CD4-positive, alpha-beta T cell (primary cell): ENCODE measurements at regions of chr1 and their contacts with region 1.

Region 1: GRCh38 chr1:24415334-24415909 is at the start of gene NIPAL3:
- DNase-seq: peak; percentile 92 to 99 (median 96)
- ATAC-seq: peak; percentile 94
- H3K4me3 ChIP-seq: peak within 1 kb of the TSS; percentile 82
- H3K4me3 Mint-ChIP-seq: peak within 1 kb of the TSS; percentile 97
- H3K27ac ChIP-seq: peak within 1 kb of the TSS; percentile 44 to 50
- H3K27ac Mint-ChIP-seq: peak within 1 kb of the TSS; percentile 91
- H3K4me1 ChIP-seq: peaks cover 61% of the 10 kb centered on the region
- H3K4me1 Mint-ChIP-seq: peaks cover 79% of the 10 kb centered on the region
- H3K27me3 ChIP-seq: no peaks in the 10 kb centered on the region
- H3K27me3 Mint-ChIP-seq: no peaks in the 10 kb centered on the region
- CTCF ChIP-seq: peak; percentile 87
- total RNA-seq, gene NIPAL3: 26.3 to 29.8 TPM

Region 2: DNA sequence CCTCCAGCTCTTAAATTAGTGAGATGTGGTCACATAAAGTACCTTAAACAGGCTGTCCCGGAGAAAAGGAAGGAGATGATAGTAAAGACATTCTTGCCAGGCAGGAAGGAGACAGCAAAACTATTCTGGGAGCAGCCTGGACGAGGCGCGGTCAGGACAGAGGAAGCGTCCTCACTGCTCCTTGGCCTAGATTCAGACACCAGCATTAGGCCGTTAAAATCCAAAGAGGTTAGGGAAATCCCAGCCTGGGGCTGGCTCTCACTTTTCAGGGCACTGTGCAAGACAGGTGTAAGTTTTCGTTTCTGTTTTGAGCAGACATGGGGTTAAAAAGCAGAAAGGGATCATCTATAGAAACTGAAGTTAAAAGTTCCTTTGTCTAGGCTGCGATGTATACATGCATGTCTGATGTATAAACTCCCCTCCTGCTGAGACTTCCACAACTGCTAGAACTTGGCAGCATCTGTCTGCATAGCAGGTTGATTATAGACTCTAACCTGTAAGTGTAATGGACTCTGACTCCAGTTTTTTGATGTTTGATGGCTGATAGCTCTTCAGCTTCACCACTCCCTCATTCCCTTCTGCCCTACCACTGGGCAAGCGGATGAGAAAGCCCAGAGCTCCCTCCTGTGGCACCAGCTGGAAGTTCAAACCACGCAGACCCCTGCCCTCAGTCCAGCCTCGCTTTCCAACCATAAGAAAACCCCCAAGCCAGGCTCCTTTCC is 23.4 kb before region 1 on chr1:
- CTCF ChIA-PET with region 1: interaction called, 40 read pairs
- POLR2A ChIA-PET with region 1: interaction called, 19 read pairs
- intact Hi-C with region 1: no loop called
- DNase-seq: peak; percentile 44 to 84 (median 55)
- ATAC-seq: peak; percentile 79
- H3K4me3 ChIP-seq: peak overlapping the region; percentile 32
- H3K4me3 Mint-ChIP-seq: peak overlapping the region; percentile 52
- H3K27ac ChIP-seq: peak overlapping the region; percentile 63 to 78
- H3K27ac Mint-ChIP-seq: peak overlapping the region; percentile 85
- H3K4me1 ChIP-seq: peaks cover 29% of the 10 kb centered on the region
- H3K4me1 Mint-ChIP-seq: peaks cover 42% of the 10 kb centered on the region
- H3K27me3 ChIP-seq: no peaks in the 10 kb centered on the region
- H3K27me3 Mint-ChIP-seq: no peaks in the 10 kb centered on the region
- CTCF ChIP-seq: peak; percentile 75

Region 3: GRCh38 chr1:24426744-24427544 is 11.5 kb after region 1 on chr1:
- CTCF ChIA-PET with region 1: interaction called, 18 read pairs
- POLR2A ChIA-PET with region 1: interaction called, 21 read pairs
- intact Hi-C with region 1: no loop called
- DNase-seq: no peak
- ATAC-seq: no peak
- H3K4me3 ChIP-seq: no peak overlapping the region
- H3K4me3 Mint-ChIP-seq: no peak overlapping the region
- H3K27ac ChIP-seq: no peak overlapping the region
- H3K27ac Mint-ChIP-seq: no peak overlapping the region
- H3K4me1 ChIP-seq: peaks cover 23% of the 10 kb centered on the region
- H3K4me1 Mint-ChIP-seq: peaks cover 77% of the 10 kb centered on the region
- H3K27me3 ChIP-seq: no peaks in the 10 kb centered on the region
- H3K27me3 Mint-ChIP-seq: no peaks in the 10 kb centered on the region
- CTCF ChIP-seq: no peak

Region 4: GRCh38 chr1:24486331-24487065 is 71.1 kb after region 1 on chr1:
- CTCF ChIA-PET with region 1: interaction called, 16 read pairs
- POLR2A ChIA-PET with region 1: interaction called, 40 read pairs
- intact Hi-C with region 1: loop called (anchors 2 to 5 kb)
- DNase-seq: peak in 12 of 14 experiments; percentile 24 to 84 (median 38)
- ATAC-seq: peak; percentile 46
- H3K4me3 ChIP-seq: peak overlapping the region; percentile 12
- H3K4me3 Mint-ChIP-seq: peak overlapping the region; percentile 77
- H3K27ac ChIP-seq: peak overlapping the region; percentile 43 to 68
- H3K27ac Mint-ChIP-seq: peak overlapping the region; percentile 98
- H3K4me1 ChIP-seq: peaks cover 78% of the 10 kb centered on the region
- H3K4me1 Mint-ChIP-seq: peaks cover 77% of the 10 kb centered on the region
- H3K27me3 ChIP-seq: no peaks in the 10 kb centered on the region
- H3K27me3 Mint-ChIP-seq: no peaks in the 10 kb centered on the region
- CTCF ChIP-seq: peak; percentile 7

Region 5: DNA sequence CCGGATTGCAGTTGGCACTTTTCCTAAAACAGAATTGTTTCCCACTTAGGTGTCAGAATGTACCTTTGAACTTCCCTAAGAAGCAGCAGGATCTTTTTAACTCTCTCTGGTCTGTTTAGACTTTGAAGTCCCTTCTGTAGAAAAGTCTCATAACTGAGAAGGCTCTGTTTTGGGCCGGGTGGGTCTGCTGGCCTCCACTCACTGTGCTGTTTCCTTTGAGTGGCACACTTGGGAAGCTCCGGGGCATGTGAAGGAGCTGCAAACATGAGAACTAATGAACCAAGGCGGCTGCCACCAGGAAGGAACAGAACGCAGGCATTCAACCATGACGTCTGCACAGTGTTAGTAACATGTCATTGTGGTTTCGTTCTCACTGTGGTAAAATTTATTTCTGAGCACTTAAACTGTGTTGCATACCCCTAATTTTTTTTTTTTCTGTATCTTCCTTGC is 121.0 kb after region 1 on chr1:
- CTCF ChIA-PET with region 1: interaction called, 18 read pairs
- POLR2A ChIA-PET with region 1: interaction called, 15 read pairs
- intact Hi-C with region 1: loop called in 1 of 2 experiments (anchors 1 kb)
- DNase-seq: peak; percentile 41 to 94 (median 64)
- ATAC-seq: peak; percentile 80
- H3K4me3 ChIP-seq: no peak overlapping the region
- H3K4me3 Mint-ChIP-seq: peak overlapping the region; percentile 86
- H3K27ac ChIP-seq: peak overlapping the region; percentile 86 to 95
- H3K27ac Mint-ChIP-seq: peak overlapping the region; percentile 96
- H3K4me1 ChIP-seq: peaks cover 43% of the 10 kb centered on the region
- H3K4me1 Mint-ChIP-seq: peaks cover 79% of the 10 kb centered on the region
- H3K27me3 ChIP-seq: no peaks in the 10 kb centered on the region
- H3K27me3 Mint-ChIP-seq: no peaks in the 10 kb centered on the region
- CTCF ChIP-seq: no peak

Region 6: GRCh38 chr1:24642481-24643361 is 227.3 kb after region 1 on chr1 and contains the start of gene SRRM1:
- CTCF ChIA-PET with region 1: interaction called, 5 read pairs
- POLR2A ChIA-PET with region 1: interaction called, 11 read pairs
- intact Hi-C with region 1: loop called (anchors 1 to 5 kb)
- DNase-seq: peak; percentile 96 to 100 (median 98)
- ATAC-seq: peak; percentile 87
- H3K4me3 ChIP-seq: peak within 1 kb of the TSS; percentile 89
- H3K4me3 Mint-ChIP-seq: peak within 1 kb of the TSS; percentile 90
- H3K27ac ChIP-seq: peak within 1 kb of the TSS; percentile 99
- H3K27ac Mint-ChIP-seq: peak within 1 kb of the TSS; percentile 96
- H3K4me1 ChIP-seq: peaks cover 26% of the 10 kb centered on the region
- H3K4me1 Mint-ChIP-seq: peaks cover 55% of the 10 kb centered on the region
- H3K27me3 ChIP-seq: no peaks in the 10 kb centered on the region
- H3K27me3 Mint-ChIP-seq: no peaks in the 10 kb centered on the region
- CTCF ChIP-seq: no peak
- total RNA-seq, gene SRRM1: 338 to 360 TPM